IMR-90 (cell line): ENCODE measurements at regions of chr12 and their contacts with region 1.

Region 1: GRCh38 chr12:125220404-125220803 is 155.2 kb downstream of the AACS start:
- DNase-seq: no peak
- ATAC-seq: no peak
- H3K4me3 ChIP-seq: no peak overlapping the region
- H3K27ac ChIP-seq: no peak overlapping the region
- H3K4me1 ChIP-seq: no peaks in the 10 kb centered on the region
- H3K27me3 ChIP-seq: no peaks in the 10 kb centered on the region
- CTCF ChIP-seq: no peak
- POLR2A ChIP-seq: no peak
- RAD21 ChIP-seq: no peak

Region 2: GRCh38 chr12:126708492-126708896 is 1488.1 kb after region 1 on chr12:
- CTCF ChIA-PET with region 1: no interaction called
- POLR2A ChIA-PET with region 1: interaction called, 12 read pairs
- dilution Hi-C with region 1: no loop called
- in situ Hi-C with region 1: no loop called
- intact Hi-C with region 1: no loop called
- DNase-seq: no peak
- ATAC-seq: no peak
- H3K4me3 ChIP-seq: no peak overlapping the region
- H3K27ac ChIP-seq: no peak overlapping the region
- H3K4me1 ChIP-seq: no peaks in the 10 kb centered on the region
- H3K27me3 ChIP-seq: no peaks in the 10 kb centered on the region
- CTCF ChIP-seq: no peak
- POLR2A ChIP-seq: no peak
- RAD21 ChIP-seq: no peak

Region 3: DNA sequence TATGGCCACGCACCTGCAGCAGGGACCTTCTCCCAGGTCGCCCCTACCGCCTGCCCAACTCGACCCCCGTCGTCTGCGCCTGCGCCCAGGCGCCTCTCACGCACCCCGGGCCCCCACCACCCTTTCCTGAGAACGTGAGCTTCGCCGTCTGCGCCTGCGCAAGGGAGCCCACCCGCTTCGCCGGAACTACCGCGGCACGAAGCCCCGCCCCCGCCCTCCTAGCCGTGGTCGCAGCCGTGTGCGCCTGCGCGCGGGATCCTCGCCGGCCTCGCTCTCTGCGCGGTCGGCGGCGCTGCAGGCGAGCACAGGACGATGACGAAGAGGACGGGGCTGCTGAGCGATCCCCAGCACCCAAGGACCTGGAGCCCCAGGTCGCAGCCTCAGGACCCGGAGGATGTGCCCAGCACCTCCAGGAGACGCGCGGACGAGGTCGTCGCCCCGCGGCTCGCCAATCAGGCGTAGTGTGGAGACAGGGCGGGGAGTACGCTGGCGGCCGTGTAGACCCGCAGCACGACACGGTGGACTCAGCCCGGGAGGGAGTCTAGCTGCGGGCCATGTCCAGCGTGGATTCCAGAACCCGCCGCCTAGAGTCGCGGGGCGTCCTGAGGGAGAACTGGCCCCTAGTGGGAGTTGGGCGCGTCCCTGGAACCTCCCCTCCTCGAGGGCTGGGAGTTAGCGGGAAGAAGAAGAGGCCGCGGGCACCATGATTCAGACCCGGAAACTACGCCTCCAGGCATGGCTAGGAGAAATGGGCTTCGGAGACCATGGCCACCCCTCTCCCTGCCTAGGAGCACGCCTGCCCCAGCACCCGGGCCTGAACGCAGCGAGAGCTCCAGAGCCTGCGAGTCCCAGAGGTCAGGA is 1925.8 kb after region 1 on chr12:
- CTCF ChIA-PET with region 1: no interaction called
- POLR2A ChIA-PET with region 1: no interaction called
- dilution Hi-C with region 1: no loop called
- in situ Hi-C with region 1: no loop called
- intact Hi-C with region 1: no loop called
- DNase-seq: peak; percentile 15
- ATAC-seq: peak; percentile 32; the same call in 1 of the 2 replicates
- H3K4me3 ChIP-seq: peak overlapping the region; percentile 63
- H3K27ac ChIP-seq: 0 out of 2 replicates have a peak overlapping the region, but pooled peaks have one; percentile 41
- H3K4me1 ChIP-seq: no peaks in the 10 kb centered on the region
- H3K27me3 ChIP-seq: no peaks in the 10 kb centered on the region
- CTCF ChIP-seq: no peak
- POLR2A ChIP-seq: no peak
- RAD21 ChIP-seq: no peak